WTC11 (cell line): ENCODE measurements at regions of chr4 and their contacts with region 1.

Region 1: GRCh38 chr4:8688041-8688937 is 95.7 kb downstream of the CPZ start:
- DNase-seq: peak; percentile 89
- ATAC-seq: peak; percentile 97
- H3K4me3 Mint-ChIP-seq: no peak overlapping the region
- H3K27ac Mint-ChIP-seq: no peak overlapping the region
- H3K4me1 Mint-ChIP-seq: 0 out of 2 replicates have a peak, but pooled peaks cover 2% of the 10 kb centered on the region
- H3K27me3 Mint-ChIP-seq: peaks cover 48% of the 10 kb centered on the region
- CTCF ChIP-seq: peak; percentile 86

Region 2: DNA sequence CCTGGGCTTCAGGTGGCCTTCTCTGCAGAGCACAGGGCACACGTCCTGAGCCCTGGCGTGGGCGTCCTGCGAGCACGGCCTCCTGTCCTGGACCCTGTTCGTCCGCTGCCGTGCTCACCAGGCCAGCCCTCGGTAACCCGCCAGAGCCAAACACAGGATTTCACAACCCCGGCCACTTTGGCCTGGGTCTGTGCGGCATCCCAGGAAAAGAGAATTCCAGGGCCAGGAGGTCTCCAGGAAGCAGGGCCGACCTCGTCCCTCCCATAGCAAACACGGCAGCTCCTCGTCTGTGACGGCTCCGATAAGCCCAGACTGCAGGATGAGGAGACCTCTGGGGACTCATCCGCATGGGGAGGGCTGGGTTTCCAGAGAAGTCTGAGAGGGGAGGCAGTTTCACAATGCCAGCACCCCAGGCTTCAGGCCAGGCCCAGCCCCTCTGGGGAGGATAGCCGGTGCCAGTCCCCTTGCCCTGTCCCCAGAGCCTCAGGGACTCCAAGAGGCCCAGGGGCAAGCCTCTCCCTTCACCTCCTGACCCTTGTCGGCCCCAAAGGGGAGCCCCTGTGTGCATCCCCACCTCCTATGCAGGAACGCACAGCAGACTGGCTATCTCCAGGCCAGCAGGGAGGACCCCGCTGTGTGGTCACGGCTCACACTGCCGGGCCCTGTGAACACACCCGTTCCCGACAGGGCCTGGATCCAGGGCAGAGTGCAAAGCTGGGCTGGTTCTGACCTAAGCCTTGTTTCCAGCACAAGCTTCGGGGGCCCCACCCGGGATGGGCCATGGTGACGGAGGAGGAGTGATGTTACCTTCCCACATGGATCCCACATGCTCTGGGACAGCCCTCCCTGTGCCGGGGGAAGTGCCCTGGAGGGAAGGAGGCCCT is 441.0 kb before region 1 on chr4:
- CTCF ChIA-PET with region 1: no interaction called
- POLR2A ChIA-PET with region 1: no interaction called
- DNase-seq: no peak
- ATAC-seq: no peak
- H3K4me3 Mint-ChIP-seq: no peak overlapping the region
- H3K27ac Mint-ChIP-seq: no peak overlapping the region
- H3K4me1 Mint-ChIP-seq: no peaks in the 10 kb centered on the region
- H3K27me3 Mint-ChIP-seq: no peaks in the 10 kb centered on the region; the same call in 1 of the 2 replicates
- CTCF ChIP-seq: no peak

Region 3: DNA sequence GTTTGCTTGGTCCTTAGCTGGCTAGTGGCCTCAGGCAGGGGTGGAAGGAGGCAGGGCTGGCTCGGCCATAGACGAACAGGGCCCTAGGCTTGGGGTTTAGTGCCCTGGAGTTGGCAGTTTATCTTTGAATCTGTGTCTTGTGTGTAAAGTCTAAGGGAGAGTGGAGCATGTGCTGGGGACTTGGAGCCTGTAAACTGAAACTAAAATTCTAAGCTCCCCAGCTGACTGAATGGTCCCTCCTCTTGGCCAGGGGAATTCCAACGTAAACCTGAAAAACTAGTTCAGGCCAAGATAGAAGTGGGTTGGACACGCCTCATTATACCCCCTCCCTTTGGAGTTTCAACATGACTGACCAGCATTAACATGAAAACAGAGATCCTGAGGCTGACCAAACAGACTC is 154.2 kb before region 1 on chr4:
- CTCF ChIA-PET with region 1: no interaction called
- POLR2A ChIA-PET with region 1: no interaction called
- DNase-seq: no peak
- ATAC-seq: peak; percentile 93
- H3K4me3 Mint-ChIP-seq: 0 out of 2 replicates have a peak overlapping the region, but pooled peaks have one; percentile 9
- H3K27ac Mint-ChIP-seq: peak overlapping the region; percentile 94
- H3K4me1 Mint-ChIP-seq: peaks cover 36% of the 10 kb centered on the region
- H3K27me3 Mint-ChIP-seq: peaks cover 7% of the 10 kb centered on the region; the same call in 1 of the 2 replicates
- CTCF ChIP-seq: no peak

Region 4: GRCh38 chr4:8675383-8675782 is 12.9 kb before region 1 on chr4:
- CTCF ChIA-PET with region 1: interaction called, 31 read pairs
- POLR2A ChIA-PET with region 1: no interaction called
- DNase-seq: peak; percentile 89
- ATAC-seq: peak; percentile 99
- H3K4me3 Mint-ChIP-seq: no peak overlapping the region
- H3K27ac Mint-ChIP-seq: no peak overlapping the region
- H3K4me1 Mint-ChIP-seq: no peaks in the 10 kb centered on the region
- H3K27me3 Mint-ChIP-seq: peaks cover 14% of the 10 kb centered on the region
- CTCF ChIP-seq: no peak

Region 5: DNA sequence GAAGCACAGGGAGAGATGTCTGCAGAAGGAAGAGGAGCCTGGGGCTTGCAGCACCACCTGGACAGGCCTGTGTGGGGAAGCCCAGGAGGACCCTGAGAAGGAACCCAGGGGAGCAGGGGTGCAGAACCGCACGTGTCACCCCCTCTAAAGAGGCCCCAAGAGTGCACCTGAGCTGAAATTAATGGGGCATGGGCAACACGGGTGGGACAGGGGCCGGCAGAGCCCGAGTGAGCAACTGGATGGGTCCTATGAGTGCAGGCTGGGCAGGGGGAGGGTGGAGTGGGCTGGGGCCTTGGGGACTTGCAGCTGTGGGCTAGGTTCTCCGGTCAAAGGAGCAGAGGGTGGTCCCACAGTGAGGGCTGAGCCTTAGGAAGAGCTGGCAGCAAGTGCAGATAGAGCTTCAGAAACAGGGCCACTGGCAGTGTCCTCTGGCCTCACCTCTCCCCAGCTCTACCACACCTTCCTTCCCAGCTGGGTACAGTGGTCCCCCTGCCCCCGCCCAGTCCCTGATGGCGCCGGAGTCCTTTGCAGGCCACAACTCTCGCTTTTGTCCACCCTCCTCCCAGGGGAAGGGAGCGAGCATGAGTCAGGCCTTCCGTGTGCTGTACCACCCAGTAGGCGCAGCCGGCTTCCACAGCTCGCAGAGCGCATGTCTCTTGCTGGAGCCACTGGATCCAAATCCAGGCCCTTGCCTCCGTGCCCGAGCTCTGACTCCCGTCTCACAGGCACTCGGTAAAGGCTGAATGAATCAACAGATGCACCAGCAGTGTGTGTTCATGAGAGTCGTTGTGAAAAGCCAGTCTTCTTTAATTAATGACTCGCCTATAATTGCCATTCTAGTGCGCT is 51.8 kb after region 1 on chr4:
- CTCF ChIA-PET with region 1: interaction called, 10 read pairs
- POLR2A ChIA-PET with region 1: no interaction called
- DNase-seq: no peak
- ATAC-seq: no peak
- H3K4me3 Mint-ChIP-seq: no peak overlapping the region
- H3K27ac Mint-ChIP-seq: no peak overlapping the region
- H3K4me1 Mint-ChIP-seq: peaks cover 6% of the 10 kb centered on the region
- H3K27me3 Mint-ChIP-seq: no peaks in the 10 kb centered on the region
- CTCF ChIP-seq: no peak

Region 6: DNA sequence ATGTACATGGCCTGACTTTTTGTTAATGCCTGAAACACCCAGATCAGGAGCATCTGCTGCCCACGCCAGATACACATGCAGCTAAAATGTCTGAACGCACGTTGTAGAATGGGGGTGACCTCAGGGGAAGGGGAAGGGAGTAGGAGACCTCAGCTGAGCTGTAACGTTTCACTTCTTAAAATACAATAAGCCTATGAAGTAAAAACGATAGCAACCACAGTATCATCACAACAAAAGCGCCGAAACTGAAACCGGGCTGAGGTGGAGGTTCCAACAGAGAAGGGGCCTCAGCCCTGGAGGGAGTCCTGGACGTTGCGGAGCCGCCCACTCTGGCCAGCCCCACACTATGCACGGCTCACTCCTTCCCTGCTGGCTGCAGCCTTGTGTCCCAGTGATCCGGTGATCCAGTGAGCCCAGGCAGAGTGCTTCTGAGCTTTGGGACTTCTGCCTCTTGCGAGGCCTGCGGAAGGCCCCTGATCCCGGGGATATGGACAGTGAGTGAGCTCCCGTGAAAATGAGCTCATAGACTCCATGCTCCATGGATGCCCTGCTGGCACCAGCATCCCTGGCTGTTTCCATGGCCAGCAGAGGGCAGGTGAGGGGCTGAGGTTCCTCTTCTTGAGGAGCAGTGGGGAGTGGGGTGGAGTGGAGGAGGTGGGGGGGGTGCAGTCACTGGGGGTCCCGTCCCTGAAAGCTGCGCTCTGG is 131.3 kb after region 1 on chr4:
- CTCF ChIA-PET with region 1: interaction called, 10 read pairs
- POLR2A ChIA-PET with region 1: no interaction called
- DNase-seq: no peak
- ATAC-seq: peak; percentile 64
- H3K4me3 Mint-ChIP-seq: no peak overlapping the region
- H3K27ac Mint-ChIP-seq: no peak overlapping the region
- H3K4me1 Mint-ChIP-seq: no peaks in the 10 kb centered on the region
- H3K27me3 Mint-ChIP-seq: no peaks in the 10 kb centered on the region
- CTCF ChIP-seq: no peak

Region 7: GRCh38 chr4:8854931-8855330 is 166.6 kb after region 1 on chr4:
- CTCF ChIA-PET with region 1: interaction called, 97 read pairs
- POLR2A ChIA-PET with region 1: no interaction called
- DNase-seq: no peak
- ATAC-seq: no peak
- H3K4me3 Mint-ChIP-seq: no peak overlapping the region
- H3K27ac Mint-ChIP-seq: no peak overlapping the region
- H3K4me1 Mint-ChIP-seq: peaks cover 30% of the 10 kb centered on the region
- H3K27me3 Mint-ChIP-seq: peaks cover 82% of the 10 kb centered on the region
- CTCF ChIP-seq: no peak

Region 8: DNA sequence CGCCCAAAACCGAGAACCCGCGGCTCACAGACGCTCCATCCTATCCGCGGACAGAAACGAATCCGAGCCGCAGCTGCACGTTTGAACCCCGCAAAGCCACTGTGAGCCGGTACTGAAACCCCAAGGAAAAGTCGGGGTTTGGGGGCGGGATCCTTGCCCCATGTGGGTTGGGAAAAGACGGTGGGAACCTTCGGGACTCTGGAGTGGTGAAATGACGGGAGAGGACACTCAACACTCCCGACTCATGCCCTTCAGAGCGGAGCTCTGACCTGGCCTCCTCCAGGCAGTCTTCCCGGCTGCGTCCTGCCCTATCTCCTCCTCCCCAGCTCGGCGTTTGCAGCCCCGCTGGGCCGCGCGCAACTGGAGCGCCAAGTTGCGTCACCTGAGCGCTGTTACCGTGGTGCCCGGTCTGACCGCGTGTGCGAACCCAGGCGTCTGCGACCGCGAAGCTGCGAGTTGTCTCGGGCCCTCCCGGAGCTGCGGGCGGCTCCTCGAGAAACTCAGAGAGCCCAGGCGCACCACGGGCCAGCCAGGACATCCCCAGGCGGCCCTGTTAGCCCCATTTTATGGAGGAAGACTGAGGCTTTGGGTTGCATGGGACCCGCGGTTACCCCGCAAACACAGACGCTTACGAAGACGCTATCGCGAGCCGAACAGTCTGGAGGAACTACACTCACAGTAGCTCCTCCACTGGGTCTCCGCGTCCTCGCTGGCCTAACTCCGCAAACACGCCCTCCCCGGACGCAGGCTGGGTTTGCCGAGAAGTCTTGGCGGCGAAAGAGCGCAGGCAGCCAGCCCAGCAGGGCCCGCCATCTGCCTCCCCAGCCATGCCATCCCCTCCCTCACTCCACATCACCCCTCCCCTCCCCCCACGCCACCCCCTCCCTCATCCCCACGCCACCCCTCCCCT is 203.6 kb after region 1 on chr4:
- CTCF ChIA-PET with region 1: interaction called, 27 read pairs
- POLR2A ChIA-PET with region 1: no interaction called
- DNase-seq: peak; percentile 71
- ATAC-seq: peak; percentile 14
- H3K4me3 Mint-ChIP-seq: peak overlapping the region; percentile 50
- H3K27ac Mint-ChIP-seq: no peak overlapping the region
- H3K4me1 Mint-ChIP-seq: peaks cover 25% of the 10 kb centered on the region
- H3K27me3 Mint-ChIP-seq: peaks cover 100% of the 10 kb centered on the region
- CTCF ChIP-seq: no peak